ENCODE measurements at regions of chr16 and their contacts with region 1.

Region 1: DNA sequence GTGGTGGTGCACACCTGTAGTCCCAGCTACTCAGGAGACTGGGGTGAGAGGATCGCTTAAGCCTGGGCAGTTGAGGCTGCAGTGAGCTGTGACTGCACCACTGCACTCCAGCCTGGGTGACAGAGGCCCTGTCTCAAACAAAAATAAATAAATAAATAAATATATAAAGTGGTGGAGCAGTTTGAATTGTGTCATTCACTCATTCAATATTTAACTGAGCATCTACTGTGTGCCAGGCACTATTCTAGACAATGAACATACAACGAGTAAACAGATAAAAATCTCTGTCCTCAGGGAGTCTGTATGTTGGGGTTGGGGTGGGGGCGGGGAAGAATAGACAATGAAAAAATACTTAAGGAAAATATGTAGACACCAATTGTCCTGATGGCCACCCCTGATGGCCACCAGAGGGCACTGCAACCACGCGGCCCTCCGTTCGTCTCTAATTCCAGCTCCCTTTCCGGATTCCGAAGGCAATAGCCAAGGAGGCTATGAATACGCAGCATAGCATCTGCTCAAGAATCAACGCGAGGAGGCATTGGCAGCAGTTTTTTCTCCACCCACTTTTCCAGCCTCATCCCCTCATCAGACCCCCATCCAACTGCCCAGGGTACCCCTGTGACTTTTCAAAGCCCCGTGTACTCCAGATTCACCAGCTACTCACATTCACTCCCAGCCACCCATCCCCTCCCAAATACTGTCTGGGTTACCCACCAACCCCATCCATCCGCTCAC is 21.4 kb downstream of the QPRT start:
- DNase-seq: peak; percentile 83 to 90
- H3K4me3 ChIP-seq: no peak overlapping the region
- H3K27ac ChIP-seq: no peak overlapping the region
- H3K4me1 ChIP-seq: peaks cover 7% of the 10 kb centered on the region; the same call in 1 of the 2 replicates
- H3K27me3 ChIP-seq: no peaks in the 10 kb centered on the region
- CTCF ChIP-seq: peak; percentile 96

Region 2: GRCh38 chr16:29664091-29664921 is 36.1 kb before region 1 on chr16:
- CTCF ChIA-PET with region 1: no interaction called
- POLR2A ChIA-PET with region 1: no interaction called
- intact Hi-C with region 1: no loop called
- DNase-seq: no peak
- H3K4me3 ChIP-seq: no peak overlapping the region
- H3K27ac ChIP-seq: no peak overlapping the region
- H3K4me1 ChIP-seq: no peaks in the 10 kb centered on the region
- H3K27me3 ChIP-seq: no peaks in the 10 kb centered on the region
- CTCF ChIP-seq: no peak

Region 3: DNA sequence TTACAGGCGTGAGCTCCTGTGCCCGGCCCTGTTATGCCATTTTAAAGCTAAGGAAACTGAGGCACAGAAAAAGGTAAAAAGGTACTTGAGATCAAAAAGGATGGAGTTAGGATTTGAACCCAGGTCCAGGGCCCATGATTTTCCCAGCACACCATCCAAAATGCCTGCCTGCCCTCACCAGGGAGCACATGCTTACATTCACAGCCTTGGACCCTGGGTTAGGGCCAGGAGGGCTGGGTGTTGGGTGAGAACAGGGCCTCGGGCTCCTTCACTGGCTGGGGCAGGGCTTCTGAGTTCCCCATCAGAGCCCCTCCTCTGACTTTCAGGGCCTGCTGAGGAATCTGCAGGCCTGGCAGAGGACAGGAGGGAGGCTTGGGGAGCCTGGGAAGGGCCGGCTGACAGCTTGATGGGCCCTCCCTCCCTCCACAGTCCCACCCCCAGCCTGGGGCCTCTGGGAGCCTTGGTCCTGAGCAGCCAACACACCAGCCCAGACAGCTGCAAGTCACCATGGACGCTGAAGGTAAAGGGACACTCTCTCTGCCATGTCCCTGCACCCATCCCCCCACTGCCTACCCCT is 21.6 kb before region 1 on chr16 and contains the start of gene QPRT:
- CTCF ChIA-PET with region 1: interaction called, 17 read pairs
- POLR2A ChIA-PET with region 1: no interaction called
- intact Hi-C with region 1: no loop called
- DNase-seq: peak; percentile 78 to 88
- H3K4me3 ChIP-seq: peak within 1 kb of the TSS; percentile 75
- H3K27ac ChIP-seq: peak within 1 kb of the TSS; percentile 81
- H3K4me1 ChIP-seq: peaks cover 14% of the 10 kb centered on the region
- H3K27me3 ChIP-seq: no peaks in the 10 kb centered on the region
- CTCF ChIP-seq: no peak
- total RNA-seq, gene QPRT: 247 and 310 TPM in 2 replicates

Region 4: GRCh38 chr16:29790183-29790952 is 89.9 kb after region 1 on chr16 and contains the start of gene KIF22:
- CTCF ChIA-PET with region 1: no interaction called
- POLR2A ChIA-PET with region 1: interaction called, 3 read pairs
- intact Hi-C with region 1: loop called (anchors 1 kb)
- DNase-seq: peak; percentile 96 to 100
- H3K4me3 ChIP-seq: peak within 1 kb of the TSS; percentile 94
- H3K27ac ChIP-seq: 0 out of 2 replicates have a peak within 1 kb of the TSS, but pooled peaks have one; percentile 10
- H3K4me1 ChIP-seq: peaks cover 17% of the 10 kb centered on the region
- H3K27me3 ChIP-seq: no peaks in the 10 kb centered on the region
- CTCF ChIP-seq: peak; percentile 81
- total RNA-seq, gene KIF22: 179 and 195 TPM in 2 replicates

Region 5: DNA sequence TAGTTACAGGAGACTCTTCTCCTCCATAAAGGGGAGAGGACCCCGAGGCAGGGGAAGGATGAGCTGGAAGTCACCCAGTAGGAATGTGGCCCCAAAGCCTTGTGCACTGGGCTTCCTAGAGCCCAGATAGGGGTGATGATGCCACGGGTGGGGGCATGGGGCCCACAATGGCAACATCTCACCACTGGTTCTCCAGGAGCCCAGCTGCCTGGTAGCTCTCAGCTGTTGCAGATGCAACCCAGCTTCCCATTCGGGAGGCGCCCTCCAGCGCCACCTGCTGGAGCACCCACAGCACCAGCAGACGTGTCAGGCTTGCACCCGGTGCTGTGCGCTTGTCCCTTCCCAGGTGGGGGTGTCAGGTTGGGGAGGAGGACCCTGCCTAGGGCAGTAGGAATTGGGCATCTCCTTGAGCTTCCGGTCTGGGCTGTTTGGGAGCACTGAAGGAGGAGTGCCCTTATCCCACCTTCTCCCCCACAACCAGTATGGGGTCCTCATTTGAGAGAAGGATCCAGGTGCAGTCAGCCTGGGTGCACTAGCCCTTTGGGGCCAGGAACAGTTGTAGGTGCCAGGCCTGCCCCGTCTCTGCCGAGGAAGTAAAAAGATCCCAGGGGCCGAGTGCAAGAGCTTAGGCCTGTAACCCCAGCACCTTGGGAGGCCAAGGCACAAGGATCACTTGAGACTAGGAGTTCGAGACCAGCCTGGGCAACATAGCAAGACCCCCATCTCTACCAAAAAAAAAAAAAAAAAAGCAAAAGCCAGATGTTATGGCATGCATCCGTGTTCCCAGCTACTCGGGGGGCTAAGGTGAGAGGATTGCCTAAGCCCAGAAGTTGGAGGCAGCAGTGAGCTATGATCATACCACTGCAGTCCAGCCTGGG is 148.2 kb after region 1 on chr16:
- CTCF ChIA-PET with region 1: interaction called, 11 read pairs
- POLR2A ChIA-PET with region 1: interaction called, 9 read pairs
- intact Hi-C with region 1: loop called (anchors 1 kb)
- DNase-seq: peak in 1 of 2 experiments; percentile 75
- H3K4me3 ChIP-seq: no peak overlapping the region
- H3K27ac ChIP-seq: no peak overlapping the region
- H3K4me1 ChIP-seq: no peaks in the 10 kb centered on the region
- H3K27me3 ChIP-seq: no peaks in the 10 kb centered on the region
- CTCF ChIP-seq: peak; percentile 90

Region 6: DNA sequence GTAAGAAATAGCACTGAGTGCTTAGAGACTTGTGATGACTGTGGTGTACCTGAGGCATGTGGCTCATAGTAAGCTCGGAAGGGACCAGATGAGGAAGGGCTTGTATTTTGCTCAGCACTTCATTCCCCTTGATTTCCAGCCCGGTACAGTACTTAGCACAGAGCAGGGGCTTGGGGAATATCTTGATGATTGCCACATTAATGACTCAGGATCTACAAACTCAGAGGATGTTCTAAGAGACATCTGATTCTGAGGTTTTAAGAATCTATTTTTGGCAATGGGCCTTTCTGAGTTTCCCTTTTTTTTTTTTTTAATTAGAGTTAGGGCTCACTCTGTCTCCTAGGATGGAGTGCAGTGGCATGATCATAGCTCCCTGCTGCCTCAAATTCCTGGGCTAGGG is 209.0 kb after region 1 on chr16:
- CTCF ChIA-PET with region 1: interaction called, 5 read pairs
- POLR2A ChIA-PET with region 1: interaction called, 18 read pairs
- intact Hi-C with region 1: no loop called
- DNase-seq: no peak
- H3K4me3 ChIP-seq: no peak overlapping the region
- H3K27ac ChIP-seq: no peak overlapping the region
- H3K4me1 ChIP-seq: no peaks in the 10 kb centered on the region
- H3K27me3 ChIP-seq: no peaks in the 10 kb centered on the region
- CTCF ChIP-seq: no peak

Region 7: DNA sequence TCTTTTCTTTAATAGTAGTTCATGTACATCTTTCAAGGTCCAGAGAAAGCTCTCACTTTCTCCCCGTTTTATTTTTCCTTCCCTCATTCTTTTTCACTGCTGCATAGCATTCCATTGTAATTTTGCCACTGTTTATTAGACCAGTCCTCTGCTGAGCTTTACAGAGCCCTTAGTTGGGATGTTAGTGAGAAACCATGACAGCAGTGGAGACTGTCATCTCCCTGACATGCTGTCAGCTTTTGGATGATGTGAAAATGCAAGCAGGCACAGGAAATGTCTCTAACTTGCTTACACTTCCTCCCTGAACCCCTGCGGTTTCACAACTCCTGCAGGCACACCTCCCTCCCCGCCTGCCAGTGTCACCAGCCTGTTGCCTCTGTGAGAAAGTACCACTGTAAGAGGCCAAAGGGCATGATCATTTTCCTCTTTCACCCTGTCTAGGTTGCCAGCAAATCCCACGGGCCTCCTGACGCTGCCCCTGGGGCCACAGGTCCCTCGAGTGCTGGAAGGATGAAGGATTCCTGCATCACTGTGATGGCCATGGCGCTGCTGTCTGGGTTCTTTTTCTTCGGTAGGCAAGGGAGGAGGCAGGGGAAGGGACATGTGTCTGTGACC is 772.0 kb after region 1 on chr16 and contains the start of gene ITGAL:
- CTCF ChIA-PET with region 1: no interaction called
- POLR2A ChIA-PET with region 1: no interaction called
- intact Hi-C with region 1: no loop called
- DNase-seq: no peak
- H3K4me3 ChIP-seq: no peak within 1 kb of the TSS
- H3K27ac ChIP-seq: no peak within 1 kb of the TSS
- H3K4me1 ChIP-seq: no peaks in the 10 kb centered on the region; the same call in 1 of the 2 replicates
- H3K27me3 ChIP-seq: peaks cover 14% of the 10 kb centered on the region; the same call in 1 of the 2 replicates
- CTCF ChIP-seq: no peak
- total RNA-seq, gene ITGAL: 0.50 TPM in 1 of 2 replicates, not detected in the other